ENCODE measurements at regions of chr10 and their contacts with region 1.

Region 1: DNA sequence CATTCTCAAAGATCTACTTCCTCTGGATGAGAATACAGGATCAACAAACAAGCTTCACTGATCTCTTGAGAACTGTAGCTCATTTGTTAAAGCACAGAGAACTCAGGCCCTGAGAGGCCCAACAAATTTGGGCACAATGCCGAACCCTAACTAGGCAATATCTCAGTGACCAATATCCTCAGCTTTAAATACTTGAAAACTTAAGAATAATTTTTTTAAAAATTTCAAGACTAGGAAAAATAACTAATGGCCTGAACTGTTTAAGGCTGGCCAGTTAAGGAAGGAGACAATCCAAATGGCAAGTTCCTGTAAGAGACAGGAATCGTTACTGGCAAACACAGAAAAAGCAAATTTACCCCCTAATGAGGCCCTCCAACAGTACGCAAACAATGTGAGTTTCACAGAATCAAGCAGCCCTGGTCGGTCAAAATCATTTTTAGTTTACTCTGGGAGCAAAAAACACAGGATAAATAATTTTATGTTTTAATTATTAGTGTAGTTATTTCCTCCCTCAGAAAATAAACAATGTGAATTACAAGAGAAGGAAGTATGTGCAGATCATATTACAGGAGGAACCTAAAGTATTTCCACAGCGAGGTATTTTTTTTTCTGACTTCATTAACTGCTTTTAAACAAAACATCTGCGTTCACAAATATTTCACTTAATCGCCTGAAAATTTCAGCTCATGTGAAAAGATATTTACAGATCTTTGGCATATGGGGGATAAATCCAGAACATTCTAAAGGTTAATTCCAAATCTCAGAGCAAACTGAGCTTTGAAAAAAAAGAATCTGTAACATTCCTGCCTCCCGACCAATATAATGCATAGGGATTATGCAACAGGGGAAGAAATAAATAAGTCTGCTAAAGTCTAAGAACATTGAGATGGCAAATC is 39.5 kb downstream of the NT5C2 start:
- DNase-seq: no peak
- ATAC-seq: peak; percentile 45
- H3K4me3 ChIP-seq: no peak overlapping the region
- H3K27ac ChIP-seq: peak overlapping the region; percentile 33 to 82
- H3K4me1 ChIP-seq: peaks cover 0 to 8% of the 10 kb centered on the region in 2 donors
- H3K27me3 ChIP-seq: no peaks in the 10 kb centered on the region

Region 2: DNA sequence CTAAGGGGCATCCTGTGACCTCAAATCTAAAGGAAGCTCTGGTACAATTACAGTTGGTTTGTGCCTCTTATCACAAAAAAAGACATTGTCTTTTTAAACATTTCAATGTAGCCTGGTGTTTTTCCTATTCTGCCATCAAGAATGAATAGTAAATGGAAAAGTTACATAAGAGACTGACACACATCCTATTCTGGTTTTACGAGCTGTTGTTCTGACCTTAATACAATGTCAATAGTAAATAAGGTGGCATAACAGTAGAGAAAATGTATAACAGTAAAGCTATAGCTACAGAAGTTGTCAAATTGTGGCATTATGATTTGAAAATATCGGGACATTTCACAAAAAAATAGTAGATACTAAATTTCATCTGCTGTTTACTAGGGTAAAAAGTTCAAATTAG is 48.8 kb before region 1 on chr10:
- intact Hi-C with region 1: loop called (anchors 5 kb)
- DNase-seq: no peak
- ATAC-seq: no peak
- H3K4me3 ChIP-seq: no peak overlapping the region
- H3K27ac ChIP-seq: no peak overlapping the region
- H3K4me1 ChIP-seq: no peaks in the 10 kb centered on the region
- H3K27me3 ChIP-seq: no peaks in the 10 kb centered on the region

Measured in aorta (tissue), 5 donors.